ENCODE measurements at regions of chr3 and their contacts with region 1.

Region 1: GRCh38 chr3:16290007-16290826 is 25.2 kb downstream of the OXNAD1 start:
- DNase-seq: peak; percentile 79
- ATAC-seq: no peak
- H3K4me3 Mint-ChIP-seq: peak overlapping the region; percentile 79
- H3K27ac Mint-ChIP-seq: peak overlapping the region; percentile 94
- H3K4me1 Mint-ChIP-seq: peaks cover 94% of the 10 kb centered on the region
- H3K27me3 Mint-ChIP-seq: no peaks in the 10 kb centered on the region

Region 2: DNA sequence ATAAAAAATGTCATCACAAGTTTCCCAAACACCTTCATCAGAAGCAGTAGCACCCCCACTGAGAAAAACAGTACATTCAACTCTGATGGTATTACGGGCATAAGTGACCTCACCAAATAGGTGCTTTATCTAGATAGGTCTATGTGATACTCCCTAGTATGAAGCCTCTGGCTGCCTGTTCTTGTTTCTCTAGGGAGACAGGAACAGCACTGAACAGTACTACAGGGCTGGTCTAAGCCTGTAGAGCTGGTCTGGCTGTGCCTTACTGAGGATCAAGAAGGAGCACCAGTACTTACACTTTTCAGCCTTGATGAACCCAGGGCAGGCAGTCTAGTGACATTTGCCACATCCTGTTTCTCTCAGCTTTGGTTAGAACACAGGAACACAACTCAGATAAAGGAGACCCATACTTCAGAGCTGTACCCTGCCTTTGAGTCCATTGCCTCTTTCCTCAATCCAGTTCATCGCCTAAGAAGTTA is 10.7 kb after region 1 on chr3:
- CTCF ChIA-PET with region 1: interaction called, 100 read pairs
- POLR2A ChIA-PET with region 1: interaction called, 7 read pairs
- intact Hi-C with region 1: loop called (anchors 1 kb)
- DNase-seq: peak; percentile 53
- ATAC-seq: peak; percentile 55
- H3K4me3 Mint-ChIP-seq: peak overlapping the region; percentile 66
- H3K27ac Mint-ChIP-seq: peak overlapping the region; percentile 96
- H3K4me1 Mint-ChIP-seq: peaks cover 98% of the 10 kb centered on the region
- H3K27me3 Mint-ChIP-seq: no peaks in the 10 kb centered on the region

Region 3: GRCh38 chr3:16378920-16379319 is 88.7 kb after region 1 on chr3:
- CTCF ChIA-PET with region 1: no interaction called
- POLR2A ChIA-PET with region 1: interaction called, 4 read pairs
- intact Hi-C with region 1: loop called (anchors 2 to 5 kb)
- DNase-seq: peak; percentile 45
- ATAC-seq: peak; percentile 66
- H3K4me3 Mint-ChIP-seq: no peak overlapping the region
- H3K27ac Mint-ChIP-seq: peak overlapping the region; percentile 89
- H3K4me1 Mint-ChIP-seq: peaks cover 95% of the 10 kb centered on the region
- H3K27me3 Mint-ChIP-seq: no peaks in the 10 kb centered on the region

Region 4: DNA sequence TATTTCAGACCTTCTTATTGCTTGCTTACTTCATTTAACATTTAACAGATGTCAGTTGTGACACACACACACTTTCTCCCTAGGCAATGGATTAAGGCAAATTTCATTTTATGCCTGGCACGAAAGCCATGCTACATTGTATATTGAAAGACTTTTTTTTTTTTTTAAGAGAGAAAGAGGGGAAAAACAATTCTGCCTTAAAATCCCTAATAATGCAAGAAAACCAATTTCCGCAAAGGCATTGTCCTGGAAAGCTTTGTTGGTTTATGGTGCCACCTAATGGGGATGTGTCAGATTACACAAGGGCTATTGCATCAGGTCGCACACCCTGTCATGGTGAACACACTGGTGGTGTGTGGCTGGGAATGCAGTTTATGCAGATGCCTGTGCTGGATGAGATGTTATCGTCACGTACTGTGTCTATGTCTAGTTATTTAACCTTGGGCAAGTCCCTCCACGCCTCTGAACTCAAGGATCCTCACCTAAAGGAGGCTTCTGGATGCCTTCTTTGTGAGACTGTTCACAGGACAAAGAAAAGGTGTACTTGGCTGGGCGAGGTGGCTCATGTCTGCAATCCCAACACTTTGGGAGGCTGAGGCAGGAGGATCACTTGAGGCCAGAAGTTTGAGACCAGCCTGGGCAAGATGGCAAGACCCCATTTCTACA is 260.6 kb after region 1 on chr3:
- CTCF ChIA-PET with region 1: interaction called, 35 read pairs
- POLR2A ChIA-PET with region 1: no interaction called
- intact Hi-C with region 1: loop called (anchors 1 kb)
- DNase-seq: peak; percentile 87
- ATAC-seq: peak; percentile 99
- H3K4me3 Mint-ChIP-seq: no peak overlapping the region
- H3K27ac Mint-ChIP-seq: peak overlapping the region; percentile 93
- H3K4me1 Mint-ChIP-seq: peaks cover 14% of the 10 kb centered on the region
- H3K27me3 Mint-ChIP-seq: no peaks in the 10 kb centered on the region

Region 5: DNA sequence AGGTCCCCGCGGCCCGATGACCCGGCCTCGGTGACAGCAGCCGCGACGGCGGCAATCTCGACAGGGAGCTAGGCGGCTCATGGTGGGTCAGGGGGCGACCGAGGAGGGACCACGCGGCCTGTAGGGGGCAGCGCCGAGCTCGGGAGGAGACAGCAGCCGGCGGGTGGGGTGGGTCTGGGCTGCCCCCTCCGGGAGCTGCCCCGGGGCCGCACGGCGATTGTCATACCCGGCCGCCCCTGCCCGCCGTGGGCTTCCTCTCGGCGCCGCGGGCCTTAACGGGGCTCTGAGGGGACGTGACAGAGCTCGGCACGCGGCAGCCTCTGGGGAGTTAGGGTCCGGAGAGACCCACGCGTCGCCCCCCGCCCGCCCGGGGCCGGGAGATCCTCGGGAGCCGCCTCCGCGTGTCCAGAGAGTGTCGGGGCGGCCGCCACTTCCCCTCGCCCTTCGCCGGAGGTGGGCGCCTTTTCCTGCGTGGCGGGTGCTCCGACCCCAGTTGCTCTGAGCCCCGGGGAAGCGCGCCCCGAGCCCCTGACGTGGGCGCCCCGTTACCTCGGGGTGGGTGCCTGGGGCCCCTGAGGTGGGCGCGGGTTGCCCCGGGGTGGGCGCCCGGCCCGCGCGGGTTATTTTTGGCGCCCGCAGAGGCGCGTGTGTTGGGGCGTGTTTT is 594.0 kb after region 1 on chr3:
- CTCF ChIA-PET with region 1: no interaction called
- POLR2A ChIA-PET with region 1: no interaction called
- intact Hi-C with region 1: loop called in 1 of 2 experiments (anchors 5 kb)
- DNase-seq: peak; percentile 87
- ATAC-seq: peak; percentile 61
- H3K4me3 Mint-ChIP-seq: peak overlapping the region; percentile 93
- H3K27ac Mint-ChIP-seq: peak overlapping the region; percentile 94
- H3K4me1 Mint-ChIP-seq: peaks cover 20% of the 10 kb centered on the region
- H3K27me3 Mint-ChIP-seq: no peaks in the 10 kb centered on the region

Region 6: DNA sequence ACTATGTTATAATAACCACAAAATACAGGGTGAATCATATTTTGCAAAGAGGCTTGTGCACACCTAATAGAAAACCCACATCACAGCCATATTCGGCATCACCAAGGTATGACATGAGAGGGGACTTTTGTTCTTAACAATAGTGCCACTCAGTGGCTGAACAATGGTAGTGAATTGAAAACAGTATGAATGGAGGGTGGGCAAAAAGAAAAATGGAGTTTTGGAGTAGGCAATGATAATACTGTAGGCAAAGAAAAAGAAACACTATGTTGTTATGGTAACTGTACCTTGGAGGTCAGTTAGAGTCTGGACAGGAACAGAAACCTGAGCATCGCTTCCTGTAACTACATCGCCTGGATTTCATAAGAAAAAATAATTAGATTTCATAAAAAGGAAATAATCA is 943.2 kb after region 1 on chr3:
- CTCF ChIA-PET with region 1: no interaction called
- POLR2A ChIA-PET with region 1: no interaction called
- intact Hi-C with region 1: loop called in 1 of 2 experiments (anchors 1 kb)
- DNase-seq: peak; percentile 47
- ATAC-seq: peak; percentile 91
- H3K4me3 Mint-ChIP-seq: no peak overlapping the region
- H3K27ac Mint-ChIP-seq: no peak overlapping the region
- H3K4me1 Mint-ChIP-seq: peaks cover 24% of the 10 kb centered on the region
- H3K27me3 Mint-ChIP-seq: no peaks in the 10 kb centered on the region

Measured in activated CD4-positive, alpha-beta T cell treated with anti-CD3 and anti-CD28 coated beads for 36 hours (primary cell).